ENCODE measurements at regions of chr5 and their contacts with region 1.

Region 1: DNA sequence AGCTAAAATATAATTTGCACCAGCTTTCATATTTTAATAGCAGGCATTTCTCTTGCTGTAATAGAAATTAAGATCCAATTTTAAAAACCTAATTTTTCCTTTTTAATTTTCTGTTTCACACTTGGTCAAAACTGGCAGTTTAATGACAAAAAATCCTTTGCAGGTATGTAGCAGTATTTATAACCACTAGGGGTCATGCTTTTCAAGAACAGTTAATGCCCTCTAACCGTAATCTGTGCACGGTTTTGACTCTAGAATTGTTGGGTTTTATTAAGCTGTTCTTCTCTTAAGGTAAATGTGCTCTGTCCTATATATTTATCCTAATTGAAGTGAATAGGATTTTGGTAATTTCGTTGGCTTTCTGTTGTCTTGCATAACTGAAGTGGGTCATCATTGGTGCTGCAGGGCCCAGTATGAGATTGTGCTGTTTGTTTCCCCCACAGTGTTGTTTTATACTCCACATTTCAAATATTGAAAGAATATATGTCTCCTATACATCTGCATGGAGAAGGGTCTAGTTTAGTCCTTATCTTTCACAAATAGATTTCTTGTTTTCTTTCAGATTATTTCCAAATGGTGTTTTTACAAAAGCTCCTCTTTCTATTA is 107.4 kb downstream of the SCAMP1 start:
- DNase-seq: peak in 1 of 35 experiments; percentile 16
- ATAC-seq: no peak
- H3K4me3 ChIP-seq: no peak overlapping the region
- H3K4me3 Mint-ChIP-seq: no peak overlapping the region
- H3K27ac ChIP-seq: no peak overlapping the region
- H3K27ac Mint-ChIP-seq: no peak overlapping the region
- H3K4me1 ChIP-seq: no peaks in the 10 kb centered on the region
- H3K4me1 Mint-ChIP-seq: peaks cover 0 to 11% (median 0%) of the 10 kb centered on the region in 3 donors
- H3K27me3 ChIP-seq: no peaks in the 10 kb centered on the region
- H3K27me3 Mint-ChIP-seq: no peaks in the 10 kb centered on the region

Region 2: GRCh38 chr5:77569409-77569808 is 898.4 kb before region 1 on chr5:
- CTCF ChIA-PET with region 1: no interaction called
- POLR2A ChIA-PET with region 1: no interaction called
- DNase-seq: no peak
- ATAC-seq: no peak
- H3K4me3 ChIP-seq: no peak overlapping the region
- H3K4me3 Mint-ChIP-seq: no peak overlapping the region
- H3K27ac ChIP-seq: no peak overlapping the region
- H3K27ac Mint-ChIP-seq: no peak overlapping the region
- H3K4me1 ChIP-seq: no peaks in the 10 kb centered on the region
- H3K4me1 Mint-ChIP-seq: no peaks in the 10 kb centered on the region
- H3K27me3 ChIP-seq: no peaks in the 10 kb centered on the region
- H3K27me3 Mint-ChIP-seq: peaks cover 12 to 22% of the 10 kb centered on the region in 2 donors

Region 3: DNA sequence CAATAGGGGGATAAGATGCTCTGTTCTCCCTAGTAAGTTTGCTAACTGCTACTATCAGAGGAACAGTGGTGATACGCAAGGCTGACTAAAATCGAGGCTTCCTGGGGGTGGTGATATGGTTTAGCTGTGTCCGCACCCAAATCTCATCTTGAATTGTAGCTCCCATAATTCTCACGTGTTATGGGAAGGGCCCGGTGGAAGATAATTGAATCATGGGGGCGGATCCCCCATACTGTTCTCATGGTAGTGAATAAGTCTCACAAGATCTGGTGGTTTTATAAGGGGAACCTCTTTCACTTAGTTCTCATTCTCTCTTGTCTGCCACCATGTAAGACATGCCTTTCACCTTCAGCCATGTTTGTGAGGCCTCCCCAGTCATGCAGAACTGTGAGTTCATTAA is 45.6 kb after region 1 on chr5:
- CTCF ChIA-PET with region 1: no interaction called
- POLR2A ChIA-PET with region 1: interaction called in 1 of 2 experiments, 11 read pairs
- DNase-seq: no peak
- ATAC-seq: no peak
- H3K4me3 ChIP-seq: no peak overlapping the region
- H3K4me3 Mint-ChIP-seq: no peak overlapping the region
- H3K27ac ChIP-seq: no peak overlapping the region
- H3K27ac Mint-ChIP-seq: no peak overlapping the region
- H3K4me1 ChIP-seq: peaks cover 0 to 16% of the 10 kb centered on the region in 2 experiments
- H3K4me1 Mint-ChIP-seq: peaks cover 10 to 21% (median 15%) of the 10 kb centered on the region in 3 donors
- H3K27me3 ChIP-seq: peaks cover 0 to 51% of the 10 kb centered on the region in 2 experiments
- H3K27me3 Mint-ChIP-seq: peaks cover 59 to 60% of the 10 kb centered on the region in 2 donors